Caco-2 (cell line): ENCODE measurements at regions of chr3 and their contacts with region 1.

Region 1: DNA sequence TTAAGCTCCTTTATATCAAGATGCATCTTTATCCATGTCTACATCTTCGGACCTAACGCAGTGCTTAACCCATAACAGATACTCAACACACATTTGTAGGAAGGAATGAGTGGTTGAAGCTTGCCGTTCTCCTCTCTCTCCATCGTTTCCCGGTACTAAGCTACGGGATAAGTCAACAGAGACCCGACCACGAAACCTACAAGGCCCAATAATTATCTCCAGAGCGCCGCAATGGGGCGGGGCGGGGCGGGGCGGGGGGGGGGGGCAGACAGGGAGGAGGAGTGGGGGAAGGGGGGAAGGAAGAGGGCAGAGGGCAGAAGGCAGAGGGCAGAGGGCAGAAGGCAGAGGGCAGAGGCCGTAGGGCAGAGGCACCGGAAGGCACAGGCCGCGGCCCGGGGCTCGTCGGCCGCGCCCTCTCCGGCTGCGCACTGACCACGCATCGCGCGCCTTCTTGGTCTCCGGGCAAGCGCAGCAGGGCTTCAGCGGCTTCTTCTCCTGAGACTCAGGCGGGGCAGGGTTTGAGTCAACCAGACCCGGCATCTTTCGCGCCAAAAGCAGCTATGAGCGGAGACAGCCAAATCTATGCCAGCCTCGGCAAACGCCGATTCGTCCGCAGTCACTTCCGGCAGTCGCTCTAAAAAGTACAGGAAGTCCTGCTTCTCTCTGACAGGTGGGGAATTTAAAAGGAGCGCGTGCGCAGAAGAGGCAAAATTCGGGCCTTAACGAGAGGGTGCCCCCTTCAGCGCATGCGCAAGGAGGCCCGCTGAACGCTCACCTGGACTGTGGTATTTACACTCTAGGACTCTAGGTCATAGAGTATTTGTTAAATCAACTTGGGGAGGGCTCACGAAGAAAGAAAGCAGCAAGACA is at the start of gene COX17:
- DNase-seq: peak; percentile 96 to 97
- H3K4me3 ChIP-seq: peak within 1 kb of the TSS; percentile 67
- H3K4me3 Mint-ChIP-seq: peak within 1 kb of the TSS; percentile 84
- H3K27ac Mint-ChIP-seq: peak within 1 kb of the TSS; percentile 90
- H3K4me1 ChIP-seq: peaks cover 13% of the 10 kb centered on the region
- H3K4me1 Mint-ChIP-seq: peaks cover 6% of the 10 kb centered on the region
- H3K27me3 ChIP-seq: no peaks in the 10 kb centered on the region
- H3K27me3 Mint-ChIP-seq: no peaks in the 10 kb centered on the region
- CTCF ChIP-seq: no peak
- total RNA-seq, gene COX17: 43.6 and 44.9 TPM in 2 replicates

Region 2: GRCh38 chr3:119279101-119279554 is 397.9 kb before region 1 on chr3:
- CTCF ChIA-PET with region 1: no interaction called
- POLR2A ChIA-PET with region 1: no interaction called
- intact Hi-C with region 1: loop called (anchors 1 kb)
- DNase-seq: no peak
- H3K4me3 ChIP-seq: no peak overlapping the region
- H3K4me3 Mint-ChIP-seq: no peak overlapping the region
- H3K27ac Mint-ChIP-seq: no peak overlapping the region
- H3K4me1 ChIP-seq: no peaks in the 10 kb centered on the region
- H3K4me1 Mint-ChIP-seq: peaks cover 12% of the 10 kb centered on the region
- H3K27me3 ChIP-seq: no peaks in the 10 kb centered on the region
- H3K27me3 Mint-ChIP-seq: no peaks in the 10 kb centered on the region
- CTCF ChIP-seq: no peak

Region 3: DNA sequence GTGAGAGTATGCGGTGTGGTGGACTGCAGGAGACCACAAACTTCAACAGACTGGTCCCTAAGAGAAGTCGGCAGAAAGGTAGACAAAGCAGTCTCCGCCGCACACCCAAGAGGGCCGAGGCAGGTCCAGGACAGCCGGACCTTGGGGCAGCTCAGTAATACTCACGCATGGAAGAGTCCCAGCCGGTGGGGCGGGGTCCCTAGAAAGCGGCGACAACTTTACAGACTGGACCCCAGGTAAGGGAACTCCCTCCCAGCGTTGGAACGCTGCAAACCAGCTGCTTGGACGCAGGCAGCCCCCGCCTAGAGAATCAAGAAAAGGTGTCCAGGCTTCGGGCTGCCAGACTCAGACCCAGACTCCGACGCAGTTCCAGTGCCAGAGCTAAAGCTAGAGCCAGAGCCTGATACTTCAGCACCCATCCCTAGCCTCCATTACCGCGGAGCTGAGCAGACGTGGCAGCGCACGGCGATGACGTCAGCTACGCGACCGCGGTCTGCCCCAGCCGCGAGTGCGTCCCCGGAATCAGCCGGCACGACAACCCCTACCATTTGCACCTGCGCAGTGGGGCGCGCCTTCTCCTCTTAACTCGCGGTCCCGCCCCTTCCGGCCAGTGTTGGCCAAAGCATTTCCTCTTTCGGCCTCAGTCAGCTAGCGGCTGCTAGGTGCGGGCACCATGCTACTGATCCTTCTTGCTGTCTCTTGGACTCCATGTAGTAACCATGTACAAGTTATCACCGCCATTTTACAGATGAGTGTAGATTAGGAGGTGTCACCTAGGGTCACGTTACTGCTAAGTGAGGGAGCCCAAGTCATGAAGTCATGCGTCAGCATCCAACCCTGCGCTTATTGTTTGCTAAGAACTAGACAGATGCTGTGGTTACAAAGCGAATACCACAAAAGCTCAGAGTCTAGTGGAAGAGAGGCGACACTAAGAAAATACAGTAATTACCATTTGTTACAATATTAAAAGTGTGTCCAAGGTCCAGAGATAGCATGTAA is 213.5 kb before region 1 on chr3 and contains the start of gene TMEM39A:
- CTCF ChIA-PET with region 1: no interaction called
- POLR2A ChIA-PET with region 1: no interaction called
- intact Hi-C with region 1: loop called (anchors 2 kb)
- DNase-seq: peak; percentile 98 to 99
- H3K4me3 ChIP-seq: peak within 1 kb of the TSS; percentile 69
- H3K4me3 Mint-ChIP-seq: peak within 1 kb of the TSS; percentile 94
- H3K27ac Mint-ChIP-seq: peak within 1 kb of the TSS; percentile 97
- H3K4me1 ChIP-seq: no peaks in the 10 kb centered on the region
- H3K4me1 Mint-ChIP-seq: peaks cover 7% of the 10 kb centered on the region
- H3K27me3 ChIP-seq: no peaks in the 10 kb centered on the region
- H3K27me3 Mint-ChIP-seq: no peaks in the 10 kb centered on the region
- CTCF ChIP-seq: no peak
- total RNA-seq, gene TMEM39A: 50.7 and 52.1 TPM in 2 replicates

Region 4: DNA sequence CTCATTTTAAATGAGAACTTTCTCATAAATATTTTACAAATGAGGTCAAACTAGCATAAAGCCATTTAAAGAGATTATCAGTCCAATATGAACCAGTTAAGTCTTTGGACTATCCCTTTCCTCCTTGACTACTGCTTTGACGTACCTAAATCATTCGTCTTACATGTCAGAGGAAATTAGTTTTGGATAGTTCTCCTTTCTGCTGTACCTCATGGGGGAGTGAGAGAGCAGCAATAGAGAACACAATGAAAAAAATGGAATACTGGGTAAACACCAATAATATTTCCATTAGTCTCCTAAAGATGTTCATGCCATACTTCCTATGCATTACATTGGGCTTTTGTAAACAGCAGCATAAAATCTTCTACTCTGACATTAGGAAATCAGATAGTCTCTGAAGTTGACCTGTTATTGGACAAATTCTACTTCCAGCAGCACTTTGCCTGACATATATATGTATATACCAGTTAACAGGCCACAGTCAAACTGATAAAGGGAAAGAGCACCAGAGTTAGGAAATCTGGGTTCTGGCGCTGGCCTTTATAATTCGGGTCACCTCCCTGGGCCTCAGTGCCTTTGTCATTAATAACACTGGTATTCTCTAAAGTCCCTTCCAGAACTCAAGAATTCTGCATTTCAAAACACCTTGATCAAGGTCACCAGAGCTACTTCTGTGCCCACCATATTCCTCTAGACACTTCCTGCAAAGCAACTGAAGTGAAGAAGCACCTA is 151.9 kb before region 1 on chr3:
- CTCF ChIA-PET with region 1: no interaction called
- POLR2A ChIA-PET with region 1: no interaction called
- intact Hi-C with region 1: loop called (anchors 1 kb)
- DNase-seq: no peak
- H3K4me3 ChIP-seq: no peak overlapping the region
- H3K4me3 Mint-ChIP-seq: no peak overlapping the region
- H3K27ac Mint-ChIP-seq: no peak overlapping the region
- H3K4me1 ChIP-seq: no peaks in the 10 kb centered on the region
- H3K4me1 Mint-ChIP-seq: no peaks in the 10 kb centered on the region
- H3K27me3 ChIP-seq: no peaks in the 10 kb centered on the region
- H3K27me3 Mint-ChIP-seq: no peaks in the 10 kb centered on the region
- CTCF ChIP-seq: peak in 1 of 2 experiments; percentile 26

Region 5: GRCh38 chr3:119630128-119630879 is 46.7 kb before region 1 on chr3:
- CTCF ChIA-PET with region 1: no interaction called
- POLR2A ChIA-PET with region 1: no interaction called
- intact Hi-C with region 1: loop called (anchors 5 kb)
- DNase-seq: no peak
- H3K4me3 ChIP-seq: no peak overlapping the region
- H3K4me3 Mint-ChIP-seq: no peak overlapping the region
- H3K27ac Mint-ChIP-seq: no peak overlapping the region
- H3K4me1 ChIP-seq: 0 out of 2 replicates have a peak, but pooled peaks cover 3% of the 10 kb centered on the region
- H3K4me1 Mint-ChIP-seq: peaks cover 7% of the 10 kb centered on the region
- H3K27me3 ChIP-seq: no peaks in the 10 kb centered on the region
- H3K27me3 Mint-ChIP-seq: no peaks in the 10 kb centered on the region
- CTCF ChIP-seq: no peak